MCF 10A (cell line): ENCODE measurements at regions of chr15 and their contacts with region 1.

Region 1: DNA sequence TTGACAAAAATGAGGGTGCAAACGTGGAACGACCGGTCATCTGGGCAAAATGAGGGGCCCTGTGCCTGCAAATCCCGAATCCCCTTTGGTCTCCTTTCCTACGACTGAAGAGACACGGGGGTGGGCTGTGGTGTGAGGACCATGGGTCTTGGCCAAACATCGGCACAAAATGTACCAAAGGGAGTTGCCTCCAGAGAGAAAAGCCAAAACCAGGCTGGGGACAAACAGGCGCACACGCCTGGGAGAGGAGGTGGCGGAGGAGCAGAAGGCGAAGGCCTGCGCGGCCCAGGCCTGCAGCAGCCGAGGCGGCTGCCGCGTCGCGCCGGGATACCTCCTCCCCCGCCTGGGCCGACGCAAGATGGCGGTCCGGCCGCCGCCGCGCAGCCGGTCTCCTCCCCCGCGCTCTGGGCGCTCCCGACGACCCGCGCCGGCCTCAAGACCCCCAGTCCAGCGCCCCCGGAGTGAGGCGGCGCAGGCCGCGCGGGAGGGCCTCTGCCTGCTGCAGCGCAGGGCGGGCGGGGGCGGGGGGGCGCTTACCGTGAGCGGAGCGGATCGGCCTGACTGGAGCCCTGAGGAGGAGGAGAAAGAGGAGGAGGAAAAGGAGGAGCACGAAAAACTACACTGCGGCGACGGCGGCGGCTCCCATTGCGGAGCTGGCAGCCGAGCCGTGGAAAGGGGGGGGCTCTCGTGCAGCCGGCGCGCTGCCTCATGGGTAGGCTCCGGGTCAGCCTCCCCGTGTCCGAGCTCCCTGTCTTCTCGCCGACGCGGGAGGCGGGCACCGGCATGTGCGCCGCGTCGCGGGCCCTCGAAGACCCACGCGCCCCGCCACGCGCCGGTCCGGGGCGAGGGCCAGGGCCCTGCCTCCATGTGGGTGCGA is at the start of gene ZNF280D:
- DNase-seq: peak; percentile 90
- H3K4me3 Mint-ChIP-seq: peak within 1 kb of the TSS; percentile 88
- H3K27ac Mint-ChIP-seq: peak within 1 kb of the TSS; percentile 92
- H3K4me1 Mint-ChIP-seq: peaks cover 20% of the 10 kb centered on the region
- H3K27me3 Mint-ChIP-seq: no peaks in the 10 kb centered on the region
- CTCF ChIP-seq: no peak
- total RNA-seq, gene ZNF280D: 30.5 and 30.8 TPM in 2 replicates

Region 2: DNA sequence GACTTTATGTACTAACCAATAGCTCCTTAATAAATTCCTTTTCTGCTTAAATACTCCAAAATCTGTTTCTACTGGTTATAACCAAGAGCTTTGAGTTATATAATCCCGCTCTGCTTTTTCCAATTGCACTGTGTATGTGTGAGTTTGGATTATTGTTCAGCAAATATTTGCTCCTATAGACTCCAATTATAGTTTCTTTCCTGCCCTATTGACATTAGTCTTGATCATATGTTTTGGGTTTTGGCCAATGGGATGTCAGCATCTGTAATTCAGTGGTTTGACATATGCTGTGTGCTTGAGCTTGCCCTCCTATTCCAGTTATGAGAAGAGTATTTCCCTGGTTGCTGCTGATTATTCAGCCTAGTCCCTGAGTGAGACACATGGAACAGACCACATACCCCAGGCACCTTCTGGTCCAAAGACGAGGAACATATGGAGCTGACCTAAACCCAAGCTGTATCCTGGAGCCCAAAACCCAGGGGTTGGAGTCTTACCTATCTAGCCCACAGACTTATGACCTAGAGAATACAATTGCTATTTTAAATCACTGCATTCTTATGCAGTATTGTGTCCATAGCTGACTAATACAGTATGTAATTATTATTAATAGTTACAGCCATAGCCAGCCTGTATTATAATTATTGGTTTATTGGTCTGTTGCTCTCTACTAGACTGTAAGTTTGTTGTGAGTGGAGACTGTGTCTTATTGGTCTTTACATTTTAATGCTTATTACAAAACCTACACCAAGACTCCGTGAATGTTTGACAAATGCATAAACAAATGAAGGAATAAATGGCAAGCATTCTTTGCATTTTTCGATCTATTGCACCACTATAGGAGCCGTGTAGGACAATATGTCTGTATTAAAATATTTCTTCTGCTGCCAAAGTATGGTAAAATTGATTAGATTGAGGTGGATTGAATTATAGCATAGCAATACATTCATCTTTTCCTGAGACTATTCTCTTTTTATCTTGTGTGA is 11.8 kb after region 1 on chr15:
- CTCF ChIA-PET with region 1: interaction called, 4 read pairs
- POLR2A ChIA-PET with region 1: interaction called, 19 read pairs
- intact Hi-C with region 1: no loop called
- DNase-seq: no peak
- H3K4me3 Mint-ChIP-seq: no peak overlapping the region
- H3K27ac Mint-ChIP-seq: no peak overlapping the region
- H3K4me1 Mint-ChIP-seq: no peaks in the 10 kb centered on the region
- H3K27me3 Mint-ChIP-seq: no peaks in the 10 kb centered on the region
- CTCF ChIP-seq: no peak

Region 3: DNA sequence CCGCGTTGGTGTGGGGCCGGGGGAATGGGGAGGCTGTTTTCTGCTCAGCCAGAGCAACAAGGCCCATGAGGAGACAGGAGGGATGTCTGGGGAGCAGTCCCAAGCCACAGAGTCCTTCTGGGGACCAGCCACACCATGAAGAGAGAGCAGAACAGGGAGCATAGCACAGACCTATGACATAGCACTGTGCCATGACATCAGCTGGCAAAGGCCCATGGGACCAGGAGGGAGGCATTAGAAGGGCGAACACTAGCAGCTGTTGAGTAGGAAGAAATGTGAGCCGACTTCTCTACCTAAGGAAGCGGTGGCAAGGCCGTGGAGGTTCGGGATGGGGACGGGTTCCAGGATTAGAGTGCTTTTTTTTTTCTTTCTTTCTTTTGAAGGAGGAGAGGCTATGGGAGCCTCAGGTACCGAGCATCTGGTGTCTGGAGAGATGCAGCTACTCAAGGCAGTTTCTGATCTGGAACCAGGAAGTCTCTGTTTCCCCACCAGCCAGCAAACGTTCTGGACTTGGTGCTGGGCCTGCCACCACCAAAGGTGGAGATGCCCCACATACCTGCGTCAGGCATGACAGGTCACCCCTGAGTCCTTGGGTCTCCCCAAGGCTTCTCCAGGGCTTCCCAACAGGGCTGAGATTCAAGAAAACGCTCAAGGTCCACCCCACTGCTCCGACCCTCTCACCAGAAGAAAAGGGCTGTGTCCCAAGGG is 565.8 kb after region 1 on chr15:
- CTCF ChIA-PET with region 1: no interaction called
- POLR2A ChIA-PET with region 1: no interaction called
- intact Hi-C with region 1: no loop called
- DNase-seq: no peak
- H3K4me3 Mint-ChIP-seq: no peak overlapping the region
- H3K27ac Mint-ChIP-seq: no peak overlapping the region
- H3K4me1 Mint-ChIP-seq: no peaks in the 10 kb centered on the region
- H3K27me3 Mint-ChIP-seq: no peaks in the 10 kb centered on the region
- CTCF ChIP-seq: no peak

Region 4: DNA sequence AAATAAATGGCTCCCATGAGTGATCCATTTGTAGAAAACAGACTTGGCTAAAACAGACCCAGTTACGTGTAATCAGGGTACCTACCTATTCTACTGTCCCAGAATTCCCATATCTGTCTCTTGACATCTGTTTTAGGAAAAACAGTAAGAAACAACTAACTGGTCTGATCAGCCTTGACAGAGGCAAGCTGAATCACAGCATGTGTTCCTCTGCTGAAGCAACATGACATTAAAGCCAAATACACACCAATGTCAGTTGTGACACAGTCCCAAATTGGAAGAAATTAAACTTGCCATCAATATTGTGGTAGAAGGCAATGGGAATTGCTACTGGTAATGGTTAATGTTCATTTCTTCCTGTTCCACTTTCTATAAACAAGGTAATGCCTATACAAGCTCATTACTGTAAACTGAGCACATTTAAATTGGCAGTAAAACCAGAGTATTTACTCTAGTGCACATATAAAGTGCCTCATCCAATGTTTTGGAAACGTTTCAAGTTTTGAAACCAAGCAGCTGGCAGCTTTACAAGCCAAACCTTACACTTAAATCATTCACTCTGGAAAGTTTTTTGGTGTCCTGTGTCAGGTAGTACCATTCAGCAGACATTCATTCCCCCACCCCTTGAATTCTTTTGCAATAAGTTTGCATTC is 1305.4 kb after region 1 on chr15:
- CTCF ChIA-PET with region 1: no interaction called
- POLR2A ChIA-PET with region 1: no interaction called
- intact Hi-C with region 1: no loop called
- DNase-seq: peak; percentile 94
- H3K4me3 Mint-ChIP-seq: no peak overlapping the region
- H3K27ac Mint-ChIP-seq: peak overlapping the region; percentile 1
- H3K4me1 Mint-ChIP-seq: peaks cover 37% of the 10 kb centered on the region
- H3K27me3 Mint-ChIP-seq: no peaks in the 10 kb centered on the region
- CTCF ChIP-seq: no peak